ENCODE measurements at regions of chr3 and their contacts with region 1.

Region 1: DNA sequence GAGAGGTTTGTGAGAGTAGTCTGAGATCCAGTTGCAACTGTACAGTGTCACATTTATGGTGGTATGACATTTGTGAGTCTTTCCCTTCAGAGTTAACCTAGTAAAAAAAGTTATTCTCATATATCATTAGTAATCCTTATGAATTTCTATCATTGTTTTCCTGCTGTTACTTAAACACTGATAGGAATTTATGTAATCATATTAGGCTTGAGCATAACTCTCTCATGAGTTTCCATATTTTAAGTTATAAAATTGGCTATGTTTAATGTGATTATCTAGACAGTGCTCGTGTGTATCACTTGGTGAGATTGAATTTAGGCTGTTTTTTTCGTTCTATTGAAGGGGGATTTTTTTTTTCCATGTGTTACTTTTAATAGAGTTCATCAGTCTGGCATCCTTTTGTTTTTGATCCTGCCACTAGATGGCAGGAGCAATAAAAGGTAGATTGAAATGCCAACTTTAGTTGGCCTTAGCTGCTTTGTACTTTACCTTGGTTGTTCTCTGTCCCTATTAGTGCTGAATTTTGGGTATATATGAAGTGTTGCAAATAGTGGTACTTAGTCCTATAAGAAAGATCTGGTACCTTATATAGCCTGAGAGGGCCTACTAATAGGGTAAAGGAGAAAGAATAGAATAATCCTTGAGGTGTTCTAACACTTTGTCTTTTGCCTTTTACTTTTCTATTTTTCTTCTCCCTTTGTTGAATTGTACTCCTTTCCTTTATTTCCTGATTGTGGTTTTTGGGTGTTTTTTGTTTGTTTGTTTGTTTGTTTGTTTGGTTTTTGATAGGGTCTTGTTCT is 17.9 kb downstream of the STT3B start:
- ATAC-seq: peak in 3 of 8 experiments; percentile 26 to 54 (median 36)
- H3K4me3 ChIP-seq: no peak overlapping the region
- H3K27ac ChIP-seq: no peak overlapping the region
- H3K4me1 ChIP-seq: no peaks in the 10 kb centered on the region

Region 2: DNA sequence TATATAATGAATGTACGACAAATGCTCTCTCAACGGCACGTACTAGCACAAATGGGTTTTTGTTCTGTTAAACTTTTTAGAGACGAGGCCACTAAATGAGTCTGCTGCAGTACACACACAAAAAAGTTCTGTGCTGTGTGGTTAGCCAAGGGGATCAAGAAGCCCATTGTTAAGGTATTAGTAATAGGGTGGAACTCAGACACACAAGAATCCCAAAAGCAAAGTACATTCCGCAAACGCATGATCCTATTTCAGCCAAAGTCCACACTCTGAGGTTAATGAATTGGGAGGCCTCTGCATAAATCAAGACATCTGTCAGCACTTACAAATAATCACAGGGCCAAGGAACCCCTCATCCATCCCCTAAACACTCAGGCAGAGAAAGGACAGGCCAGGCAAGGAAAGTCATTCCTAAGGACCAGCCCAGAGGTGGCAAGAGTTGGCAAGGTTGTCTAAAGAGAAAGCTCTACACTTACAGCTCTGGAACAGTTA is 418.3 kb after region 1 on chr3:
- in situ Hi-C with region 1: loop called in 1 of 9 experiments (anchors 25 kb)
- ATAC-seq: peak in 5 of 8 experiments; percentile 27 to 96 (median 78)
- H3K4me3 ChIP-seq: no peak overlapping the region
- H3K27ac ChIP-seq: no peak overlapping the region
- H3K4me1 ChIP-seq: peaks cover 0 to 9% of the 10 kb centered on the region in 2 donors